Activated CD8-positive, alpha-beta T cell treated with anti-CD3 and anti-CD28 coated beads for 36 hours (primary cell): ENCODE measurements at regions of chr17 and their contacts with region 1.

Region 1: GRCh38 chr17:34998205-34998604 is 17.9 kb downstream of the LIG3 start:
- DNase-seq: peak; percentile 85
- ATAC-seq: peak; percentile 99
- H3K4me3 Mint-ChIP-seq: no peak overlapping the region
- H3K27ac Mint-ChIP-seq: peak overlapping the region; percentile 60
- H3K4me1 Mint-ChIP-seq: peaks cover 5% of the 10 kb centered on the region
- H3K27me3 Mint-ChIP-seq: no peaks in the 10 kb centered on the region
- CTCF ChIP-seq: peak; percentile 77

Region 2: DNA sequence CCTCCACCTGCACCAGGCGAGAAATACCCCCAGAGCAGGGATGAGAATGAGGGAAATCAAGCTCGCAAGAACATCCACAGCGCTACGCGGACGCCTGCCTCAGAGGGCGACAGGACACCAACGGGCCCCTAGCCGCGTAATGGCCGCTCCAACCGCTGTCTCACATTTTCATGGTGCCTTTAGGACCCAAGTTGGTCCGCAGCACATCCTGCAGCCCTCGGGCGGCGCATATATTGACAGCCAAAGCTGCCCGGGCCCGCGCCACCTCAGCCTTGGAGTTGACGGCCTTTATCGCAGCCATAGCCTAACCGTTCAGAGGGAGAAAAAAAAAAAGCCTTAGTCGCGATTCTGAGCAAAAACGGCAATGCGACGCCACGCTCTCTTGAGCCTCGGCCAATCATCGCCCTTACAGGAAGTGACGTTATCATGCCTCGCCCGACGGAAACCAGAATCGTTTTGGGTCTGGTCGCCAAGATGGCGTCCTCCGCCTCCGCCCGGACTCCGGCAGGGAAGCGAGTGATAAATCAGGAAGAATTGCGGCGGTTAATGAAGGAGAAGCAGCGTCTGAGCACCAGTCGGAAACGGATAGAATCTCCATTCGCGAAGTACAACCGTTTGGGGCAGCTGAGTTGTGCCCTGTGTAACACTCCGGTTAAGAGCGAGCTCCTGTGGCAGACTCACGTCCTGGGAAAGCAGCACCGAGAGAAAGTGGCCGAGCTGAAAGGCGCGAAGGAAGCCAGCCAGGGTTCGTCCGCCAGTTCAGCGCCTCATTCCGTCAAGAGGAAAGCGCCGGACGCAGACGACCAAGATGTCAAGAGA is 36.9 kb before region 1 on chr17 and contains the starts of genes CCT6B and ZNF830:
- CTCF ChIA-PET with region 1: no interaction called
- POLR2A ChIA-PET with region 1: no interaction called
- intact Hi-C with region 1: no loop called
- DNase-seq: peak; percentile 96
- ATAC-seq: peak; percentile 91
- H3K4me3 Mint-ChIP-seq: peak within 1 kb of the TSS; percentile 99
- H3K27ac Mint-ChIP-seq: peak within 1 kb of the TSS; percentile 100
- H3K4me1 Mint-ChIP-seq: peaks cover 21% of the 10 kb centered on the region
- H3K27me3 Mint-ChIP-seq: peaks cover 4% of the 10 kb centered on the region
- CTCF ChIP-seq: no peak
- total RNA-seq, gene CCT6B: 1.4 to 1.8 TPM
- total RNA-seq, gene ZNF830: 18.8 to 22.5 TPM

Region 3: DNA sequence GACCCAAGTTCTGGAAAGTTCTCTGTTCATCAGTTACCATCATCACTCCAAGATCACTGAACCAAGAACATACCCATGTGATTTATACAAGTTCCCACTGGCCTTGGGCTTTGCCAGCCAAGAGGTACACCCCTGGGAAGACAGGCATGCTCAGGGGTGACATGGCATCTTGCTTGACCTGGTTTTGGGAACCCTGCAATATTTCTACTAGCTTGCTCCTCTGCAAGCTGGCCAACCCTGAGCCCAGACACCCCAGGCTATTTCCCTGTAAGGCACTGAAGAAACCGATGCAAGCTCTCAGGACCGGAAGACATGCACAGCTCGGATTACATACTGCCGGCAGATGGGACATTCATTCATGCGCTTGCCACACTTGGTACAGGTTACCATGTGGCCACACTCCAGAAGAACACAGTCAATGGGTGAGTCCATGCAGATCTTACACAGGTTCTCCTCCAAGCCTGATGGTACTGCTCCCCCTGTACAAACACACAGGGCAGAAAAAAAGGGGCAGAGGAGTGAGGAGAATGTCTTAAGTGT is 13.5 kb after region 1 on chr17:
- CTCF ChIA-PET with region 1: interaction called, 20 read pairs
- POLR2A ChIA-PET with region 1: interaction called, 11 read pairs
- intact Hi-C with region 1: no loop called
- DNase-seq: no peak
- ATAC-seq: no peak
- H3K4me3 Mint-ChIP-seq: no peak overlapping the region
- H3K27ac Mint-ChIP-seq: peak overlapping the region; percentile 4
- H3K4me1 Mint-ChIP-seq: no peaks in the 10 kb centered on the region
- H3K27me3 Mint-ChIP-seq: no peaks in the 10 kb centered on the region
- CTCF ChIP-seq: no peak

Region 4: DNA sequence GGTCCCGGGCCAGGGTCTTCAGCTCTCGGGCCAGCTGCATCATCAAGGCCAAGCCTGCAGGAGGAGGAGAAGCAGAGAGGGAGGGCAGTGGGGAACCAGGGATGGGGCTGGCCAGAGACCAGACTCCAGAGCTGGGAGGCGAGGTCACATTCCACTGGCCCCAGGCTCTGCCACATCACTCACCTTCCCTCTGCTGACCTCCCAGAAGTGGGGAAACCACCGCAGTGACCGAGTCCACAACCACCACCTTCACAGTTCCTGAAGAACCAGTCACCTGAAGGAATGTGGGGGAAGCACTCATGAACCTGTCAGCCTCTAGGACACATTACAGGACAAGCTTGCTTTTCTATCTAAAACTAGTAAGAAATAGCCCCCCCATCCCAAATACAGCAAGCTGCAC is 105.1 kb after region 1 on chr17:
- CTCF ChIA-PET with region 1: no interaction called
- POLR2A ChIA-PET with region 1: no interaction called
- intact Hi-C with region 1: loop called (anchors 5 kb)
- DNase-seq: no peak
- ATAC-seq: no peak
- H3K4me3 Mint-ChIP-seq: no peak overlapping the region
- H3K27ac Mint-ChIP-seq: no peak overlapping the region
- H3K4me1 Mint-ChIP-seq: peaks cover 6% of the 10 kb centered on the region
- H3K27me3 Mint-ChIP-seq: no peaks in the 10 kb centered on the region
- CTCF ChIP-seq: no peak

Region 5: GRCh38 chr17:35390663-35391062 is 392.5 kb after region 1 on chr17:
- CTCF ChIA-PET with region 1: no interaction called
- POLR2A ChIA-PET with region 1: no interaction called
- intact Hi-C with region 1: no loop called
- DNase-seq: no peak
- ATAC-seq: no peak
- H3K4me3 Mint-ChIP-seq: no peak overlapping the region
- H3K27ac Mint-ChIP-seq: no peak overlapping the region
- H3K4me1 Mint-ChIP-seq: peaks cover 2% of the 10 kb centered on the region
- H3K27me3 Mint-ChIP-seq: no peaks in the 10 kb centered on the region
- CTCF ChIP-seq: no peak